Posterior cingulate gyrus (tissue), 11 donors: ENCODE measurements at regions of chr6 and their contacts with region 1.

Region 1: GRCh38 chr6:125153391-125154117 is at the start of gene TPD52L1:
- DNase-seq: peak; percentile 51 to 95 (median 75)

Region 2: GRCh38 chr6:125294925-125295324 is 141.4 kb after region 1 on chr6:
- intact Hi-C with region 1: loop called (anchors 10 kb)
- DNase-seq: no peak